Activated naive CD4-positive, alpha-beta T cell treated with anti-CD3 and anti-CD28 coated beads for 36 hours (primary cell): ENCODE measurements at regions of chr6 and their contacts with region 1.

Region 1: DNA sequence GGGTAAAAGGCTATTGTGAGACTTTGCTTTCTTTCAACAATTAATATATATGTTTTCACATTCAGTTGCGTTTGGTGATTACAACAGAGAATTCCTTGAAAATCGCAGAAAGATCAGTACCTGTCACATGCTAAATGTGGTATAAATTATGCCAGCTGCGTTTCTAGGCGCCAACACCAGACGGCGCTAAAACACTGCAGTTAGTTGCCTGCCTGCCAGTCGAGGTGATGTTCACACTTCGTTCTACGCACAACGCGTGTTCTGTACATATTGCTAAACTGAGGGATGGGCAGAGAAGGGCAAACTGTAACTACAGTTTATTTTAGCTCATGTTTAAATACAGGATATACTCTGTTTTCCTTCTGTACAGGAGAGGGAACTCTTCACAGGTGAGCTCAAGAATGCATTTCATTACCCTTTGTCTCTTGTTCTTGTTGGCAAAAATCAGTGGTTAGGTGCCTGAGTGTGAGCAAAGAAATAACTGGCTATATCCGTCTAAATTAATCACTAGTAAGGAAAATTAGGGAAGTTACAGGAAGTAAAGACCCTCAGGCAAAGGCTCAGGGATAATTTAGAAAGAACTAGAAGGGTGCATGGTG is 100.1 kb upstream of the RGS17 start:
- DNase-seq: peak; percentile 72
- H3K4me3 Mint-ChIP-seq: no peak overlapping the region
- H3K27ac Mint-ChIP-seq: no peak overlapping the region
- H3K4me1 Mint-ChIP-seq: no peaks in the 10 kb centered on the region
- H3K27me3 Mint-ChIP-seq: peaks cover 4% of the 10 kb centered on the region

Region 2: DNA sequence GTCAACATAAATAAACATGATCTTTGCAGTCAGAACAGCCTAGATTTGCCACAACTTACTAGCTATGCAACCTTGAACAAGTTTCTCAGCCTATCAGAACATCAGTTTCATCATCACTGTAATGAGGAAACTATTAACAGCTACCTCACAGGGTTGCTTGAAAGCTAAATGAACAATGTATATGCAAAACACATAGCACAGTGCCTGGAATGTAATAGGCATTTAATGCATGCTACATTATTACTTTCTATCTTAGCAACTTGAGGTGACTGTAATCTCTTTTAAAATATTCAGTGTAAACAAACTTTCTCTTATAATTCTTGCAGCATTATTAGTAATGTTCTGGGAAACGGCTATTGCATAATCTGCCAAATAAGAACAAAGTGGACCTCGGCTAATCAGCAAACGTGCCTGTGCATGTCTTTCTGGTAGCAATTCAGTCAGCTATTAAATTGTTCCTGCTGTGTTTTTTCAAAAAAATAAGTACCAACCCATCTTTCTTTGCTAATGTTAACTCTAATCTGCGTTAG is 655.5 kb before region 1 on chr6:
- CTCF ChIA-PET with region 1: no interaction called
- intact Hi-C with region 1: no loop called
- DNase-seq: no peak
- H3K4me3 Mint-ChIP-seq: no peak overlapping the region
- H3K27ac Mint-ChIP-seq: no peak overlapping the region
- H3K4me1 Mint-ChIP-seq: no peaks in the 10 kb centered on the region
- H3K27me3 Mint-ChIP-seq: peaks cover 9% of the 10 kb centered on the region

Region 3: GRCh38 chr6:153032255-153032882 is 198.8 kb before region 1 on chr6:
- CTCF ChIA-PET with region 1: no interaction called
- intact Hi-C with region 1: loop called (anchors 5 kb)
- DNase-seq: no peak
- H3K4me3 Mint-ChIP-seq: no peak overlapping the region
- H3K27ac Mint-ChIP-seq: no peak overlapping the region
- H3K4me1 Mint-ChIP-seq: no peaks in the 10 kb centered on the region
- H3K27me3 Mint-ChIP-seq: peaks cover 7% of the 10 kb centered on the region

Region 4: GRCh38 chr6:153312641-153313040 is 81.5 kb after region 1 on chr6:
- CTCF ChIA-PET with region 1: interaction called, 4 read pairs
- intact Hi-C with region 1: loop called (anchors 1 kb)
- DNase-seq: peak; percentile 54
- H3K4me3 Mint-ChIP-seq: no peak overlapping the region
- H3K27ac Mint-ChIP-seq: no peak overlapping the region
- H3K4me1 Mint-ChIP-seq: no peaks in the 10 kb centered on the region
- H3K27me3 Mint-ChIP-seq: no peaks in the 10 kb centered on the region

Region 5: DNA sequence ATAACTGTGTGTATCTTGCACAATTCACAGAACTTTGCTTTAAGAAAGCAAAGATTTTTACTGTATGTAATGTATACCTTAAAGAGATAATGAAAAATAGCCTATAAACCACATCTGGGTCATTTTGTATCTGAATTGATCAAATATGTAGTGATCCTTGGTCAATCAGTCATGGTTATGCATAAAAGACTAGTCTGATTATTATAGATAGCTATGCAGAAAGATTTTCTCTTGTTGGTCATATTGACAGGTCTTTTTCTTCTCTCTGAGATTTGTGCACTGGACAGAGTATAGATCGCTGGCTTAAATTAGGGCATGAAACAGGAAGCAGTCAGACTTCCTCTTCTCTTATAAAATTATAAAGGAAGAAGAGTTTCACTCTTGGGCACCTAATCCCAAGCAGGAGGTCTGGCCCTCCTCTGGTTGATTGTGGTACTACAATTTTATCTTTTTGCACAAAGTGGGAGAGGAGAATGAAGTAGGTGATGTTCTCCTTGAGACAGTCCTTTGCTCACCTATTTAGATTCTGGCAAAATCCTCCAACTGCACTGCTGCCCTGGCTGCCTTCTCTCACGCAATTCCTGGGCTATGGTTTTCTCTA is 280.8 kb after region 1 on chr6:
- CTCF ChIA-PET with region 1: interaction called, 4 read pairs
- intact Hi-C with region 1: loop called (anchors 1 kb)
- DNase-seq: no peak
- H3K4me3 Mint-ChIP-seq: no peak overlapping the region
- H3K27ac Mint-ChIP-seq: no peak overlapping the region
- H3K4me1 Mint-ChIP-seq: no peaks in the 10 kb centered on the region
- H3K27me3 Mint-ChIP-seq: no peaks in the 10 kb centered on the region

Region 6: DNA sequence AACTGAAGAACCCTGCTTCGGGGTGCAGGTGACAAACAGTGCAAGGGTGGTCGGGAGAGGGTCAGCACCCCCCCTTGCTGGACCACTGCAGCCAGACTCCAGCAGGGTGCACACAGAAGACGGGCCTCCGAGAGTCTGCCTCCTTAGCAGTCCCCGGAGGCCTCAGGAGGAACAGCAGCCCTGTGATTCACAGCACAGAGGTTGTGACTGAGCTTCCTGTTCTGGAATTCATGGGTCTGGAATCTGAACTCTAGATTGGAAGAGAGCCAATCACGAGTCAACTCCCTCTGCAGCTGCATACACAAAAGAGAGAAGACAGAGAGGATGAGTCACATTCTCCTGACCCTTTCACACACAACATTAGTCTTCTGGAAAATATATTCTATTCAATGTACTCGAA is 558.9 kb after region 1 on chr6:
- CTCF ChIA-PET with region 1: no interaction called
- intact Hi-C with region 1: loop called (anchors 1 kb)
- DNase-seq: no peak
- H3K4me3 Mint-ChIP-seq: no peak overlapping the region
- H3K27ac Mint-ChIP-seq: no peak overlapping the region
- H3K4me1 Mint-ChIP-seq: no peaks in the 10 kb centered on the region
- H3K27me3 Mint-ChIP-seq: peaks cover 6% of the 10 kb centered on the region

Region 7: GRCh38 chr6:153947808-153948447 is 716.8 kb after region 1 on chr6:
- CTCF ChIA-PET with region 1: interaction called, 4 read pairs
- intact Hi-C with region 1: loop called (anchors 1 kb)
- DNase-seq: peak; percentile 24
- H3K4me3 Mint-ChIP-seq: no peak overlapping the region
- H3K27ac Mint-ChIP-seq: no peak overlapping the region
- H3K4me1 Mint-ChIP-seq: no peaks in the 10 kb centered on the region
- H3K27me3 Mint-ChIP-seq: peaks cover 4% of the 10 kb centered on the region

Region 8: DNA sequence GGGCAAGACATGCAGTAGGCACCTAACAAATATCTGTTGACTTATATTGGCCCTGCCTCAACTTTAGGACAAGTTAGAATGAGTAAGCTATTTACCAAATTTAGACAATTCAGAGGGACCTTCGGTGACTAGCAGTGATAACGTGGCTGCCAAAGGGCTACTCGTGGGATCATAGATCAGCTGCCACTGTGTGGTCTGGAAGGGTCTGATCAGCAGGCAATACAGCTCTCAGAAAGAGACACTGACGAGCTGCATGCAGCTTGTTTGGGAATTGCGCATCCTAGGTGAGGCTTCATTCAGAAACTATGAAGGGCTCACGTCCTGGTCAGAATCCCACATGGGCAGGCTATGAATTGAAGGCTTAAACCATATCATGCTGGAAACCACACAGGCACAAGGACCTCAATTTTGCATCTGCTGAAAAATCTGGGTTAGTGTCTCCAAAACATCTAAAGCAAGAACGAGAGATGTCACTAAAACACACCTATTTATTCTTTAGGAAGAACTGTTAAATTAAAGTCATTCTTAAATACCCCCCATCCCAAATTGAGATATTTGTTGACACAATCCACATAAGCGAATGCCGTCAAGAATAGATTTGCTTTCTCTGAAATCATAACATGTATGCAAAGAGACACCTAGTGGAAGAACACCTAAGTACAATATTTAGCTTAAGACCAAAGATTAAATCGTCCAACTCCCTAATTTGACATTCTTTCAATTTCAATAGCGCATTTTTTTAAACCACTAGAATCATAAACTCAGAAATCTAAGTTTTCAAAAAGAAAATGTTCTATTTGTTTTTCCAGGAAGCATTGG is 1045.9 kb after region 1 on chr6:
- CTCF ChIA-PET with region 1: no interaction called
- intact Hi-C with region 1: loop called (anchors 5 kb)
- DNase-seq: no peak
- H3K4me3 Mint-ChIP-seq: peak overlapping the region; percentile 65
- H3K27ac Mint-ChIP-seq: no peak overlapping the region
- H3K4me1 Mint-ChIP-seq: peaks cover 34% of the 10 kb centered on the region
- H3K27me3 Mint-ChIP-seq: no peaks in the 10 kb centered on the region